ENCODE measurements at regions of chr22 and their contacts with region 1.

Region 1: GRCh38 chr22:28829358-28830181 is 29.2 kb upstream of the XBP1 start:
- DNase-seq: peak; percentile 82
- ATAC-seq: peak; percentile 94

Region 2: DNA sequence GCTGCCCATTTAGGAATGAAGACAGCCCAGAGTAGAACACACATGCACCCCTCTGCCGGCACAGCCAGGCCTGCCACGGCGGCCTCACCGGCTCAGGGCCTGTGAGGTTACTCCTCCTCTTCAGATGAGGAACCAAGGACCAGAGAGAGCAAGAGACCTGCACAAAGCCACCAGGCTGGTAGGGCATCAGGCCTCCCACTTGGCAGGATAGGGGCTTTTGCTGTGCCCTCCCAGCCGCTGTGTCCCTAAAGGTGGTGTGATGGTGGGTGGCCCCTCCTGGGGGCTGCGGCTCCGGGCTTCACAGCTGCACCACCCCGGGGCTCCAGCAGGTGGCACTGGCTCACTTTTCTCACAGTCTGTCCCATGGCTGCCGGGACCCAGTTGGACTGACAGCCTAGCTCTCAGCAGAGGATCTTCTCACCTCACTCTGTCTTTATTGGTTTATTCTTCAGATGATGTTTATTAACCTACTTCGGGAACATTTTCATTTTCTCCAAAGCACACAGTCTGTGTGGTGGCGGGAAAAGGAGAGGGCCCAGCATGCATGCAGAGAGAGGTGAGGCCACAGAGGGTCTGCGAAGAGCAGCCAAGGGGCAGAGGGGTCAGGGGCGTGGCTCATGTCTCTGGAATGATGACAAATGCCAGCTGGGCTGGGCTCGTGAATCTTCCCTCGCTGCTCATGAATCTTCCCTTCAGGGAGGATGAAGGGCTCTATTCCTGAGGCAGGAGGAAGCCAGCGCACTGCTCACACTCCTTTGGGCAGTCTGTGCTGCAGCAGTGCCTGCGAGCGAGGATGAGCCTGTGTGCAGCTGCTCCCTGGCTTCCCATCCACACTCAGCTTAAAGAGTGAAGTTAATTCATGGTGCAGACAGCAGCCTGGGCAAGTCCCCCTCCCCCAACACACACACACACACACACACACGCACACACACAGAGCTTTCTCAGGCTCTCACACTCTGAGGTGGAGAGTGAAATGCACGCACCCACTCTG is 809.4 kb before region 1 on chr22:
- intact Hi-C with region 1: loop called (anchors 10 kb)
- DNase-seq: peak; percentile 84
- ATAC-seq: peak; percentile 73

Region 3: DNA sequence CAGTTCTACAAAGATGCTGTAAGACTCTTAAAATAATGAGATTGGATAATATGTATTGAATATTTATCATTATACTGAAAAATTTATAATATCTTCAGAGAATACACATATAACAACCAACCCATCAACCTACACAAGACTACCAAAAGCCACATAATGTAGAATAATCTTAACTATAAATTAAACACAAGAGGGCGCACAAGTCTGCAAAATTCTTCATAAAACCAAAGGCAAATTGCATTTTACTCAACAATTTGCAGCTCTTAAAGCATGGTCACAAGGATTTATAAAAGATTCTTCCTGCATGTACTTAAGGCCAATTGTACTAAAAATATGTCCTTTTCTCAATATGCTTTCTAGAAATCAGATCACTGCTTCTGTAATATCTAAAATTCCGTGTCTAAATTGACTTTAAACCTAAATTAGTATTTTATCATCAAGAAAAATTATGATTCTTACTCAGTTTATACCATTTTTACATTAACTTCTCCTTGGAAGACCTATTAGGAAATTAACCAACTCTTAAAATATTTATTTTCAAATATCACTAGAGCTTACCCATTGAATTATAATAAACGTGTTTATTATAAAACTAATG is 228.9 kb before region 1 on chr22:
- intact Hi-C with region 1: loop called (anchors 2 kb)
- DNase-seq: no peak
- ATAC-seq: peak; percentile 56

Measured in Right ventricle myocardium superior (tissue), 1 donor.